ENCODE measurements at regions of chr11 and their contacts with region 1.

Region 1: DNA sequence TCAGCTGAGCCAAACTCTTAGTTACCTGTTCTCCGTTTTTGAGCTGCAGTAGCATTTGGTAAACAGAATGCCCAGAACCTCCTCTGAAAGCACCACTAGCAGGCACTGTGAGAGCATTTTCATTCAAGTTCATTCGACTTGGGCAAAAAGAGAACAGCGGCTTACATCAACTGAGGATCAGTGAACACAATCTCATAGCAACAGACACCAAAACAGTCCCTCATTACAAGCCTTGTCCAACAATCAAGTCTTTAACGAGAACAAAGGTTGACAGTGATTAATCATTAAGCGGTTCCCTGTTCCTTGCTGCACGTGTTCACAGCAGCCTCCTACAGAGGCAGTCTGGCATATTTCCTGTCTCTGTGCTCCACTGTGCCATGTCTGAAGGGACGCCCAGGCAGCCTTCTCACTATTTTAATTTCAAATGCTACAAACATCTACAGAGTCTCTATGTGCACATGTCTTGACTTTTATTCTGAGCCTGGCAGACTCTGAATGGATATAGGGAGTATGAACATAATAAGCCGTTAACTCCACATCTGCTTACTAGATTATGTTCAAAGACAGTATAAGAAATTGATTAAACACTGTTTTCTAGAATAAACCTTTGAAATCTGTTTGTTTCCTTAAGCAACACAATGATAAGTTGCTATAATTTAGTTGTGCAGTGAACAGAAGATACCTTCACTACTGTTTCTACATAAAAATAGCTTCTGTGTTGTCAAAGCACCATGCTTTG is 88.3 kb upstream of the MTMR2 start:
- DNase-seq: peak; percentile 60
- H3K4me3 Mint-ChIP-seq: no peak overlapping the region
- H3K27ac Mint-ChIP-seq: peak overlapping the region; percentile 75
- H3K4me1 Mint-ChIP-seq: peaks cover 38% of the 10 kb centered on the region
- H3K27me3 Mint-ChIP-seq: no peaks in the 10 kb centered on the region
- CTCF ChIP-seq: no peak

Region 2: GRCh38 chr11:96054870-96055705 is 42.8 kb after region 1 on chr11:
- CTCF ChIA-PET with region 1: no interaction called
- intact Hi-C with region 1: loop called (anchors 5 kb)
- DNase-seq: no peak
- H3K4me3 Mint-ChIP-seq: no peak overlapping the region
- H3K27ac Mint-ChIP-seq: no peak overlapping the region
- H3K4me1 Mint-ChIP-seq: peaks cover 44% of the 10 kb centered on the region
- H3K27me3 Mint-ChIP-seq: no peaks in the 10 kb centered on the region
- CTCF ChIP-seq: no peak

Measured in Calu3 (cell line).